Esophagus squamous epithelium (tissue), 5 donors: ENCODE measurements at regions of chrX and their contacts with region 1.

Region 1: GRCh38 chrX:65706041-65706828 is 38.8 kb downstream of the MSN start:
- DNase-seq: no peak
- H3K4me3 ChIP-seq: no peak overlapping the region
- H3K27ac ChIP-seq: peak overlapping the region; percentile 67 to 88 (median 78)
- H3K4me1 ChIP-seq: peaks cover 12 to 58% (median 43%) of the 10 kb centered on the region in 3 donors
- H3K27me3 ChIP-seq: no peaks in the 10 kb centered on the region
- CTCF ChIP-seq: no peak
- POLR2A ChIP-seq: no peak

Region 2: GRCh38 chrX:65572971-65573370 is 133.3 kb before region 1 on chrX:
- intact Hi-C with region 1: no loop called
- DNase-seq: no peak
- H3K4me3 ChIP-seq: no peak overlapping the region
- H3K27ac ChIP-seq: no peak overlapping the region
- H3K4me1 ChIP-seq: no peaks in the 10 kb centered on the region
- H3K27me3 ChIP-seq: no peaks in the 10 kb centered on the region
- CTCF ChIP-seq: no peak
- POLR2A ChIP-seq: no peak

Region 3: GRCh38 chrX:65595460-65595876 is 110.8 kb before region 1 on chrX:
- intact Hi-C with region 1: loop called (anchors 10 kb)
- DNase-seq: peak; percentile 60
- H3K4me3 ChIP-seq: no peak overlapping the region
- H3K27ac ChIP-seq: peak overlapping the region; percentile 58 to 84 (median 78)
- H3K4me1 ChIP-seq: peaks cover 0 to 18% (median 6%) of the 10 kb centered on the region in 3 donors
- H3K27me3 ChIP-seq: no peaks in the 10 kb centered on the region
- CTCF ChIP-seq: peak; percentile 91 to 99 (median 98)
- POLR2A ChIP-seq: peak in 1 of 4 donors; percentile 28

Region 4: GRCh38 chrX:65607070-65607742 is 99.0 kb before region 1 on chrX:
- intact Hi-C with region 1: no loop called
- DNase-seq: no peak
- H3K4me3 ChIP-seq: no peak overlapping the region
- H3K27ac ChIP-seq: no peak overlapping the region
- H3K4me1 ChIP-seq: peaks cover 0 to 34% (median 12%) of the 10 kb centered on the region in 3 donors
- H3K27me3 ChIP-seq: no peaks in the 10 kb centered on the region
- CTCF ChIP-seq: no peak
- POLR2A ChIP-seq: no peak